IMR-90 (cell line): ENCODE measurements at regions of chrX and their contacts with region 1.

Region 1: DNA sequence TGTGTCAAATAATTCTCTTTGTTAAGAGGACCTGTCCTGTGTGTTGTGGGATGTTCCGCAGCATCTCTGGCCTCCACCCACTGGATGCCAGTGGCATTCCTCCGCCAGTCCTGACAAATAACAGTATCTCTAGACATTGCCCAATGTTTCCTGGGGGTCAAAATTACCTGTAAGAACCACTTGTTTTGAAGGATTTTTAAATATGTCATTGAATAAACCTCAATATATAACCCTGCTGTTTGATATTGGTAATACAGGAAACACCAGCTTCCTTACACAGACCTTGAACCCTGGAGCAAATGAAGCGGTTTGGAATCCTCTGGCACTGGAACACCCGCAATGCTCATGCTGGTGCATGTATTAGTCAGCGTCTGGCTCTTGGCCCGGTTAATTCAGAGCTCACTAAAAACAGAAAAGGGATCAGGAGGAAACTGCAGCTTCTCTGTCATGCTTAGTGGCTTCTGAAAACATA is 101.3 kb downstream of the TBL1X start:
- DNase-seq: peak; percentile 91
- ATAC-seq: peak; percentile 63
- H3K4me3 ChIP-seq: no peak overlapping the region
- H3K27ac ChIP-seq: no peak overlapping the region
- H3K4me1 ChIP-seq: peaks cover 6% of the 10 kb centered on the region; the same call in 1 of the 2 replicates
- H3K27me3 ChIP-seq: no peaks in the 10 kb centered on the region
- CTCF ChIP-seq: 0 out of 2 replicates have a peak, but pooled peaks have one; percentile 8
- POLR2A ChIP-seq: no peak
- RAD21 ChIP-seq: no peak

Region 2: DNA sequence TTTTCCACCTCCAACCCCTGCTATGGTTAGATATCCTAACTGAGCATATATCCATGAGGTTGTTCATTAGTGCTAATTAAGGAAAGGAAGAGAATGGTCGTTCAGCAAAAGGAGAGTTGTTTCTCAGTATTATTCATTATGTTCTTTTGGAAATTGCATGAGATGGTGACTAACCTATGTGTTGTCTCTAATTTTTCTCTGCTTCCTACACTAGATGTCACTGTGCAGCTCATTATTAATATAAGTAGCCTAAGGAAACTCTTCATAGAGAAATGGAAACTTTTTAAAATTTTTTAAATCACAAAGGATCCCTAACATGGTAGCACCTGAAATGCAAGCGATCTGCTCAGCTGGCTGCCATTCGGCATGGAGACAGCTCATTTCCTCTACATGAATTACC is 697.3 kb before region 1 on chrX:
- CTCF ChIA-PET with region 1: no interaction called
- POLR2A ChIA-PET with region 1: no interaction called
- dilution Hi-C with region 1: no loop called
- in situ Hi-C with region 1: no loop called
- intact Hi-C with region 1: loop called (anchors 1 kb)
- DNase-seq: peak; percentile 46
- ATAC-seq: peak; percentile 74
- H3K4me3 ChIP-seq: no peak overlapping the region
- H3K27ac ChIP-seq: peak overlapping the region; percentile 81
- H3K4me1 ChIP-seq: peaks cover 6% of the 10 kb centered on the region
- H3K27me3 ChIP-seq: no peaks in the 10 kb centered on the region
- CTCF ChIP-seq: peak; percentile 48
- POLR2A ChIP-seq: no peak
- RAD21 ChIP-seq: peak; percentile 17

Region 3: DNA sequence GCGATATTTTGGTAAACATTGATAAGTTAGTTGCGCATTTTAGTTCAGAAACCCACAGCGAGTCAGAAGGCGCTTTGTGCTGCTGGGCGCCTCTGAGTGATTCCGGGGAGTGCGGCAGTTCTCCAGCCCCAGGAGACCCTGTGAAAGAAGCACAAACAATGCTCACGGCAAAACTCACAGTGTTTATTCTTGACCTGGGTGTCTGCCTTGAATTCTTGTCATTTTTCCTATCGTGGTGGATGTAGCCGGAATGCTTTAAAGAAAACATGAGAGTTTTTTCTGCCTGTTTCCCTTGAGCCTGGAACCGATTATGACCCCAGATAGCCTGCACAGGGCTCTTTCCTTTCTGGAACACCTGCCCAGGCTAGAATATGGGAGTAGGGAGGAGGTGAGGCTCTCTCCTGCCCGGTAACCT is 94.6 kb before region 1 on chrX:
- CTCF ChIA-PET with region 1: no interaction called
- POLR2A ChIA-PET with region 1: no interaction called
- dilution Hi-C with region 1: no loop called
- in situ Hi-C with region 1: no loop called
- intact Hi-C with region 1: loop called (anchors 5 kb)
- DNase-seq: peak; percentile 63
- ATAC-seq: peak; percentile 73
- H3K4me3 ChIP-seq: no peak overlapping the region
- H3K27ac ChIP-seq: peak overlapping the region; percentile 85
- H3K4me1 ChIP-seq: peaks cover 8% of the 10 kb centered on the region
- H3K27me3 ChIP-seq: no peaks in the 10 kb centered on the region
- CTCF ChIP-seq: no peak
- POLR2A ChIP-seq: no peak
- RAD21 ChIP-seq: no peak

Region 4: GRCh38 chrX:10341309-10341708 is 775.1 kb after region 1 on chrX:
- CTCF ChIA-PET with region 1: no interaction called
- POLR2A ChIA-PET with region 1: no interaction called
- dilution Hi-C with region 1: no loop called
- in situ Hi-C with region 1: no loop called
- intact Hi-C with region 1: no loop called
- DNase-seq: no peak
- ATAC-seq: no peak
- H3K4me3 ChIP-seq: no peak overlapping the region
- H3K27ac ChIP-seq: no peak overlapping the region
- H3K4me1 ChIP-seq: no peaks in the 10 kb centered on the region
- H3K27me3 ChIP-seq: no peaks in the 10 kb centered on the region
- CTCF ChIP-seq: no peak
- POLR2A ChIP-seq: no peak
- RAD21 ChIP-seq: no peak

Region 5: GRCh38 chrX:10467793-10468192 is 901.6 kb after region 1 on chrX:
- CTCF ChIA-PET with region 1: no interaction called
- POLR2A ChIA-PET with region 1: no interaction called
- dilution Hi-C with region 1: no loop called
- in situ Hi-C with region 1: no loop called
- intact Hi-C with region 1: no loop called
- DNase-seq: peak; percentile 54
- ATAC-seq: peak; percentile 27
- H3K4me3 ChIP-seq: no peak overlapping the region
- H3K27ac ChIP-seq: peak overlapping the region; percentile 54
- H3K4me1 ChIP-seq: peaks cover 5% of the 10 kb centered on the region
- H3K27me3 ChIP-seq: no peaks in the 10 kb centered on the region
- CTCF ChIP-seq: no peak
- POLR2A ChIP-seq: no peak
- RAD21 ChIP-seq: no peak